Activated CD4-positive, alpha-beta memory T cell treated with anti-CD3 and anti-CD28 coated beads, Interleukin-2, amount 10 ng/mL, durations not matched to agents 7 days and 5 days (primary cell): ENCODE measurements at regions of chr4 and their contacts with region 1.

Region 1: DNA sequence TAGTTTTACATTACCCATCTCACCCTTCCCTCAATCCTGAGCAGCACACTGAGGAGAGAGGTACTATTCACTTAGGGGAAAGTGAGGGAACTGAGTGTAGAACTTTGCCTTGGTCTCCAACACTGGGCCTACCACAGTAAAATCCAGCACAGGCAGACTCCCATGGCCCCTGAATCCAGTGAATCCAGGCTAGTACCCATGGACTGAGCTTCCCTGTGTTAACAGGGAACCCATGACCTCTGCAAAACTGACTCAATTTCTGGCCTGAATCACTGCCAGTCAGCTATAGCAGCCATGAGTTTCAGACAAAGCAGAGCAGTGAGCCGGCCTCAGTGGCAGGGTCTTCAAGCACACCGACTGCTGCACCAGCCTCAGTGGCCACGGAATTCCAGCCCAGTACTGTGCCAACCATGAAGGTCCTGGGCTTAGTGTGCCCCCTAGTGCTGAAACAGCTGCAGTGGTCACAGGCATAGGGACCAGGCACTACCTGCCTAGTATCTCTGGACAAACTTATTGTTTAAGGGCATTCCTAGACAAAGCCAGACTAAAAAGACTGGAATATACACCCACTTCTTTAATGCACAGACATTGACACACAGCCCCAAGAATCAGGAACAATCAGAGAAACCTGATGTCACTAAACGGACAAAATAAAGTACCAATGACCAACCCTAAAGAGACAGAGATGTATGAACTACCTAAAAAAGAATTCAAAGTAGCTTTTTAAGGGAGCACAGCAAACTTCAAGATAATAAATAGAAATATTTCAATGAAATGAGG is 127.4 kb upstream of the RPL34 start:
- DNase-seq: peak; percentile 38
- H3K4me3 Mint-ChIP-seq: no peak overlapping the region
- H3K27ac Mint-ChIP-seq: no peak overlapping the region
- H3K4me1 Mint-ChIP-seq: no peaks in the 10 kb centered on the region
- H3K27me3 Mint-ChIP-seq: peaks cover 7% of the 10 kb centered on the region

Region 2: DNA sequence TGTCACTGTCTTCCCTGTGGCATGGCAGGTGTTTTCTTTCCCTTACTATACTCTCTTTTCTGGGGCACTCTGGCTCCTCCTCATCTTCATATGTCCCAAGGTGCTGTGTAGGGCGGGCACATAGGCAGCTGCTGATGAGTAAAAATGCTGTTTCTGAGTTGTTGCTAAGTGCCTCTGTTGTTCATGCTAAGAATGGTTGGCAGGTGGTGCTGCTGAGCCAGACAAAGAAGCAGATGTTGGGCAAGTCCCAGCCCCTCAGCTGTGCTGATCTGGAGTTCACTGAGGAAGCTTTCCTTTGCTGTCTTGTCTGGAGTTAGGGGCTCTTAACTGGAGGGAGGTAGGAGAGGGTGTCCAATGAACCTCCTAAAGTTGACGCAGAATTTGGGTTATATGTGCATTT is 462.7 kb before region 1 on chr4:
- CTCF ChIA-PET with region 1: interaction called, 14 read pairs
- POLR2A ChIA-PET with region 1: no interaction called
- DNase-seq: peak; percentile 71
- H3K4me3 Mint-ChIP-seq: no peak overlapping the region
- H3K27ac Mint-ChIP-seq: peak overlapping the region; percentile 19
- H3K4me1 Mint-ChIP-seq: peaks cover 25% of the 10 kb centered on the region
- H3K27me3 Mint-ChIP-seq: no peaks in the 10 kb centered on the region

Region 3: GRCh38 chr4:108477527-108478108 is 15.4 kb before region 1 on chr4:
- CTCF ChIA-PET with region 1: no interaction called
- POLR2A ChIA-PET with region 1: no interaction called
- DNase-seq: no peak
- H3K4me3 Mint-ChIP-seq: no peak overlapping the region
- H3K27ac Mint-ChIP-seq: no peak overlapping the region
- H3K4me1 Mint-ChIP-seq: peaks cover 6% of the 10 kb centered on the region
- H3K27me3 Mint-ChIP-seq: no peaks in the 10 kb centered on the region